Ascending aorta (tissue), 2 donors: ENCODE measurements at regions of chr5 and their contacts with region 1.

Region 1: DNA sequence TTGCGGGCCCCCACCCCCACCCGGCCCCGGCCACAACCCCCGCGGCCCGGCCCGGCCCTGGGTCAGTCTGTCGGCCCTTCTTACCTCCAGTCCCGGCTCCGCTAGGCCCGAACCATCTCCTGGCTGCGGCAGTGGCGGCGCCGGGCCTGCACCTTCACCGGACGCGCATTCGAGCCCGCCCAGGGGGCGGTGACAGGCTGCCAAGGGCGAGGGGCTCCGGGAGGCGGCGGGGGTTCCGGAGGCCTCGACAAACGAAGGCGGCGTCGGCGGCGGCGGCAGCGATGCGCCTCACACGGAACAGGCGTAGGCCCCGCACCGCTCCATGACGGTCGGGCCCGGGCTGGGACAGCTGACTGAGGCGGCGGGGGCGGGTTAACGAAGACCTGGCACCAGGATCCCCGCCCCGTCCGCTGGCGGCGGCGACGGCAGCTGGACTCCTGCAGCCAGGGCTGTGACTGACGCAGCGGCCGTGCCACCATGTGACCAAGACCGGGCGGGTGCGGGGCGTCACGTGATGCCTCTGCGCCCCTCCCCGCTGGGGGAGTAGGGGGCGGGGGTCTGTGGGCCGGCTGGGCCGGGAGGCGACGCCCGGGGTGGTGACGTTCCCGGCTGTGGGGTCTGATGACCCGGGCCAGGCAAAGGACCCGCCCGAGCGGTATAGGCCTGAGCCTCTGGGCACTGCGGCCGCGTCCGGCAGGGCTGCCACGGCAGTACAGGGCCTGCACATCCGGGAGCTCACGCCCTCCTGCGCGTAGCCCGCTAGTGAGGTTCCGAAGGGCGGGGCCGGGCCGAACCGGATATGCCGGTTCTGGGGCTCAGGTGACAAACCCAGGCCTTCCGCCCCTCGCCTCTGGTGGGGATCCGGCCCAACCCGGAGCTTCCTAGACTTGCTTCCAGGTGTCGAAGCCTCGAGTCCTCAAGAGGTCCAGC is at the start of gene AFF4:
- DNase-seq: peak; percentile 82 to 98
- H3K4me3 ChIP-seq: peak within 1 kb of the TSS; percentile 97 to 98
- H3K27ac ChIP-seq: peak within 1 kb of the TSS; percentile 100
- H3K4me1 ChIP-seq: peaks cover 3 to 20% of the 10 kb centered on the region in 2 donors
- H3K27me3 ChIP-seq: no peaks in the 10 kb centered on the region
- CTCF ChIP-seq: peak in 1 of 3 experiments; percentile 2
- total RNA-seq, gene AFF4: 63.0 TPM

Region 2: DNA sequence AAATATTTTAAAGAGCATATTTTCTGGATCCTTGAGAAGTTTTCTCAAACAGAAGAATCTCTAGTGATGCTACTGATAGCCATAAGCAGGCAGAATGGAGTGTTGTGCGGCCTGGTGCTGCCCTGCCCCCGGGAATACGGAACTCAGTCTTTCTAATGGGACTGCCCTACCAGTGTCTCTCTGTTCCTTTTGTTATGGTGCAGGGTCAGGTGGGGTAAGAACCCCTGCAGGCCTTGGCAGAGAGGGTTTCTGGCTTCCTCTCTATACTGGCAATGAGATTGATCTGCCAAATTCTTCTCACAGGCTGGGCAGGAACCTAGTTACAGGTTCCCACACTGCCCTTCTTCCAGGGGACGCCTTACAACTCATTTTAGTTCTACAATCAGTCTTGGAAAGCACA is 422.7 kb before region 1 on chr5:
- intact Hi-C with region 1: no loop called
- DNase-seq: no peak
- H3K4me3 ChIP-seq: no peak overlapping the region
- H3K27ac ChIP-seq: no peak overlapping the region
- H3K4me1 ChIP-seq: no peaks in the 10 kb centered on the region
- H3K27me3 ChIP-seq: no peaks in the 10 kb centered on the region
- CTCF ChIP-seq: no peak

Region 3: GRCh38 chr5:132866342-132867045 is 96.9 kb before region 1 on chr5 and contains the starts of genes GDF9 and UQCRQ:
- intact Hi-C with region 1: loop called (anchors 2 kb)
- DNase-seq: peak; percentile 92 to 98
- H3K4me3 ChIP-seq: peak within 1 kb of the TSS; percentile 82 to 85
- H3K27ac ChIP-seq: peak within 1 kb of the TSS; percentile 90 to 95
- H3K4me1 ChIP-seq: peaks cover 5 to 14% of the 10 kb centered on the region in 2 donors
- H3K27me3 ChIP-seq: no peaks in the 10 kb centered on the region
- CTCF ChIP-seq: peak in 1 of 3 experiments; percentile 23
- total RNA-seq, gene GDF9: not detected
- total RNA-seq, gene UQCRQ: 53.6 TPM

Region 4: DNA sequence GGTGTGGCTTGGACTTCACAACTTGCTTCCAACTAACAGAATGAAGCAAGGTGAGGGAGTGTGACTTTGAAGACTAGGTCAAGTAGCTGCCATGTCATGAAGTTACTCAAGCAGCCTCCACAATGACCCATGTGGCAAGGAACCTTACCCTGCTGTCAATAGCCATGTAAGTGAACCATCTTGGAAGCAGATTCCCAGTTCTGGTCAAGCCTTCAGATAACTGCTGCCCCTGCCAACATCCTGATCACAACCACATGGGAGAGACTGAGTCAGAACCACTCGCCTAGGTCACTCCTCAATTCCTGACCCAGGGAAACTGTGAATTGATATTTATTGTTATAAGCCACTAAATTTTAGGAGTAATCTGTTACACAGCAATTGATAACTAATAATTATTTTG is 52.0 kb after region 1 on chr5:
- intact Hi-C with region 1: no loop called
- DNase-seq: peak in 1 of 2 donors; percentile 24
- H3K4me3 ChIP-seq: no peak overlapping the region
- H3K27ac ChIP-seq: no peak overlapping the region
- H3K4me1 ChIP-seq: no peaks in the 10 kb centered on the region
- H3K27me3 ChIP-seq: no peaks in the 10 kb centered on the region
- CTCF ChIP-seq: no peak

Region 5: GRCh38 chr5:133025804-133026663 is 62.6 kb after region 1 on chr5 and contains the start of gene ZCCHC10:
- intact Hi-C with region 1: loop called (anchors 1 kb)
- DNase-seq: peak; percentile 75 to 97
- H3K4me3 ChIP-seq: peak within 1 kb of the TSS; percentile 86 to 87
- H3K27ac ChIP-seq: peak within 1 kb of the TSS; percentile 89 to 97
- H3K4me1 ChIP-seq: peaks cover 4 to 17% of the 10 kb centered on the region in 2 donors
- H3K27me3 ChIP-seq: no peaks in the 10 kb centered on the region
- CTCF ChIP-seq: no peak
- total RNA-seq, gene ZCCHC10: 1.9 TPM

Region 6: GRCh38 chr5:133051580-133052332 is 88.3 kb after region 1 on chr5 and contains the start of gene HSPA4:
- intact Hi-C with region 1: loop called (anchors 1 kb)
- DNase-seq: peak; percentile 88 to 99
- H3K4me3 ChIP-seq: peak within 1 kb of the TSS; percentile 92 to 95
- H3K27ac ChIP-seq: peak within 1 kb of the TSS; percentile 96 to 98
- H3K4me1 ChIP-seq: peaks cover 0 to 46% of the 10 kb centered on the region in 2 donors
- H3K27me3 ChIP-seq: no peaks in the 10 kb centered on the region
- CTCF ChIP-seq: no peak
- total RNA-seq, gene HSPA4: 16.2 TPM

Region 7: GRCh38 chr5:134004592-134005375 is 1041.3 kb after region 1 on chr5 and contains the start of gene VDAC1:
- intact Hi-C with region 1: loop called (anchors 2 kb)
- DNase-seq: peak; percentile 31 to 91
- H3K4me3 ChIP-seq: peak within 1 kb of the TSS; percentile 97
- H3K27ac ChIP-seq: peak within 1 kb of the TSS; percentile 100
- H3K4me1 ChIP-seq: peaks cover 28 to 41% of the 10 kb centered on the region in 2 donors
- H3K27me3 ChIP-seq: no peaks in the 10 kb centered on the region
- CTCF ChIP-seq: no peak
- total RNA-seq, gene VDAC1: 50.2 TPM